ENCODE measurements at regions of chr17 and their contacts with region 1.

Region 1: GRCh38 chr17:1628856-1629646 is 417 bp upstream of the SLC43A2 start:
- DNase-seq: peak; percentile 93
- H3K4me3 ChIP-seq: peak overlapping the region; percentile 36 to 73 (median 72)
- H3K27ac ChIP-seq: peak overlapping the region; percentile 40
- H3K4me1 ChIP-seq: peaks cover 15% of the 10 kb centered on the region
- H3K27me3 ChIP-seq: no peaks in the 10 kb centered on the region
- CTCF ChIP-seq: peak in 1 of 2 donors; percentile 25

Region 2: DNA sequence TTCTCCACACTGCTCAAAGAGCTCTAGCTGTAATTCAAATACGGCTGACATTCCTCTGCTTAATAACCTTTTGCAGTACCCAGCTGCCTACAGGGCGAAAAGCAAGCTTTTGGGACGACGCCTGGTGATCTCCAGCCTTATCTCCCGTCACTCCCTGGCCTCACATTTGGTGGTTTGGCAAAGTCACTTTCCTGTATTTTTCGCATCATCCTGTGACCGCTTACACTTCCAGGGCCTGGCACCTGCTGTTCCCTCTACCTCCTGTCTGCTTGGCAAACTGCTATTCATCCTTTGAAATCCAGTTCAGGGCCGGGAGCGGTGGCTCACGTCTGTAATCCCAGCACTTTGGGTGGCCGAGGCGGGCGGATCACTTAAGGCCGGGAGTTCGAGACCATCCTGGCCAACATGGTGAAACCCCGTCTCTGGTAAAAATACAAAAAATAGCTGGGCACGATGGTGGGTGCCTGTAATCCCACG is 361.5 kb before region 1 on chr17:
- CTCF ChIA-PET with region 1: no interaction called
- dilution Hi-C with region 1: no loop called
- in situ Hi-C with region 1: loop called (anchors 10 to 25 kb)
- intact Hi-C with region 1: no loop called
- DNase-seq: no peak
- H3K4me3 ChIP-seq: peak overlapping the region; percentile 57 to 75 (median 67)
- H3K27ac ChIP-seq: no peak overlapping the region
- H3K4me1 ChIP-seq: no peaks in the 10 kb centered on the region
- H3K27me3 ChIP-seq: peaks cover 19% of the 10 kb centered on the region
- CTCF ChIP-seq: no peak

Region 3: GRCh38 chr17:1365445-1366039 is 263.5 kb before region 1 on chr17:
- CTCF ChIA-PET with region 1: no interaction called
- dilution Hi-C with region 1: no loop called
- in situ Hi-C with region 1: no loop called
- intact Hi-C with region 1: loop called (anchors 2 kb)
- DNase-seq: peak; percentile 67
- H3K4me3 ChIP-seq: no peak overlapping the region
- H3K27ac ChIP-seq: no peak overlapping the region
- H3K4me1 ChIP-seq: peaks cover 21% of the 10 kb centered on the region
- H3K27me3 ChIP-seq: no peaks in the 10 kb centered on the region
- CTCF ChIP-seq: peak; percentile 88 to 93

Region 4: GRCh38 chr17:1496869-1497268 is 132.2 kb before region 1 on chr17:
- CTCF ChIA-PET with region 1: interaction called, 11 read pairs
- dilution Hi-C with region 1: loop called (anchors 10 kb)
- in situ Hi-C with region 1: no loop called
- intact Hi-C with region 1: no loop called
- DNase-seq: no peak
- H3K4me3 ChIP-seq: no peak overlapping the region
- H3K27ac ChIP-seq: no peak overlapping the region
- H3K4me1 ChIP-seq: peaks cover 24% of the 10 kb centered on the region
- H3K27me3 ChIP-seq: no peaks in the 10 kb centered on the region
- CTCF ChIP-seq: no peak

Region 5: DNA sequence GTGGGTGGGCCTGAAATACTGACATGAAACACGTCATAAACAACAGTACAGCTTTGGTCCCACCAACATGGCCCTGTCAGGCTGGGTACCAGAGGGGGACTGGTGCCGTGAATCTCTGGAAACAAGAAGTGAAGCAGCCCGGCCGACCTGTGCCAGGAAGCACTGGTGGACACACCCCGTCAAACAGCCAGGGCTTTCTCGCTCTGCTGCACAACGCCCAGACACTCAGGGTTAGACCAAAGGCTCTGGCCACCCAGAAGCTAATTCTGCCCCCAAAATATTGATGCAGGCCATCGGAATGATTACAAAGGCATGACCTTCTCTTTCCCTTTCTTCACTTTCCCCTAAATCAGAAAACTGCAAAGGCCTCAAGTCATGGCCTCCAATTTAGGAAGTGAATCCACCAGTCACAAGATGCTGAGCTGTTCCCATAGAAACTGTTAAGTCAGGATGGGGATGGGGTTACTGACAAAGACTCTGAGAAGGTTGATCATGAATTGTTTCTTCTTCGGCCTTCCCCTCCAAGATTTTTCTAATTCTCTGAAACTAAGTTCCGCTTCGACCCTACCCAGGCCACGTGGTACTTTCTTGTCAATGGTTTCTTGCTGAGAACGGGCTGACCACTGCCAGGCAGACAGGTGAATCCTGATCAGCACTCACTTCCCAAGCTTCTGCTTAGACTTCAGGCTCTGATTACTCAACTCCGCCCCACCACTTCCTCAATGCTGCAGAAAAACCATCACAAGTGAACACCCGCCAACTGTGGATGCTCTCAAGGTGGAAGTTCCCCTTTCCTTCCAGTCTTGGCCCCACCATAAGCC is 73.2 kb before region 1 on chr17:
- CTCF ChIA-PET with region 1: no interaction called
- dilution Hi-C with region 1: loop called (anchors 5 kb)
- in situ Hi-C with region 1: no loop called
- intact Hi-C with region 1: no loop called
- DNase-seq: no peak
- H3K4me3 ChIP-seq: no peak overlapping the region
- H3K27ac ChIP-seq: no peak overlapping the region
- H3K4me1 ChIP-seq: peaks cover 9% of the 10 kb centered on the region
- H3K27me3 ChIP-seq: no peaks in the 10 kb centered on the region
- CTCF ChIP-seq: no peak

Region 6: DNA sequence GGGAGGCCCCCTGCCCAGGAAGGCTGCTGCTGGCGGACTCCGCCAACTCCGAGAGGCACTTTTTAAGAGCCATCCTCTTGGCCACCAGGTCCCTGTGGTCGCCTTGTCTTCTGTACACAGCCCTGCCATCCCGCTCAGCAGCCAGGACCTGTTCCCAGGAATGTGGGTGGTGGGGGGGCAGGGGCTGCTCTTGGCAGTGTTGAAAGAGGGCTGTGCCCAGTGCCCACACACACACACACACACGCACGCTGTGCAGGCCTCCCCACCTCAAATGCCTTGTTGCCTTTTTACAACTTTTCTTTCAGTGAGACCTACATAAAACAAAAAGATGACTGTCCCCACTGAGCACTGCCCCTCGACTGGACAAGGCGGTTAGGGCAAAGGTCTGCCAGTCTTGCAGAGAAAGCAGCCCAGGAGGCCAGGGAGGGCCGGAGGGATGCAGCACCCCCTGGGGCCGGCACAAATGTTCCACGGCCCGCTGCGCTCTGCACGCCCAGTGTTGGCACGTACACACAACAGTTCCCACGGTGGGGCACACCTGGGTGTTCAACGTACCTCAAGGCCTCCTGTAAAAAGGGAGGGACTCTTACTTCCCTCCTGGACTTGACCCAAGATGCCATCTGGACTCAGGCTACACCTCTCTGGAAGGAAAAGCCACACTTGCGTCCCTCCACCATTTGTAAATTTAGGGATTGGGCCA is 47.9 kb before region 1 on chr17:
- CTCF ChIA-PET with region 1: interaction called, 5 read pairs
- dilution Hi-C with region 1: loop called (anchors 5 kb)
- in situ Hi-C with region 1: loop called in 1 of 2 experiments (anchors 5 kb)
- intact Hi-C with region 1: no loop called
- DNase-seq: no peak
- H3K4me3 ChIP-seq: no peak overlapping the region
- H3K27ac ChIP-seq: no peak overlapping the region
- H3K4me1 ChIP-seq: peaks cover 16% of the 10 kb centered on the region
- H3K27me3 ChIP-seq: no peaks in the 10 kb centered on the region
- CTCF ChIP-seq: no peak